ENCODE measurements at regions of chr5 and their contacts with region 1.

Region 1: DNA sequence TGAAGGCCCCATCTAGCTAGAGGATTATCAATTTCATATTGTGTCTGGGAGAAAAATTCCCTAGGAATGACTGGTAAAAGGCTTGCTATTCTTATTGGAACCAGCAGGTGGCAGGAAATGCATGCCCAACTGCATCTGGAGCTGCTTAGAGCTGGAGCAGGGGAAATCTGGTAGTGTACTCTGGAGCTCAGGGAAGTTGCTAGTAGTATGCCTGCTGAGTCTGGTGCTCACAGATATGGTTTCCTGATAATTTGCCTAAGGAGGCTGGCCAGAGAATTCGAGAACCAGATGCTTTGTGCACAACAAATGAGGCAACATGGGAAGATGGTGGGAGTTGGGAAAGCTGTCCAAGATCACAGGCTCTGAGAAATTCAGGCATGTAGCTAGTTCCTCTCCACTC is 53.7 kb downstream of the G3BP1 start:
- DNase-seq: peak; percentile 17
- ATAC-seq: peak; percentile 91
- H3K4me3 ChIP-seq: no peak overlapping the region
- H3K27ac ChIP-seq: no peak overlapping the region
- H3K4me1 ChIP-seq: no peaks in the 10 kb centered on the region
- H3K27me3 ChIP-seq: no peaks in the 10 kb centered on the region
- CTCF ChIP-seq: peak; percentile 76 to 95 (median 84)
- EP300 ChIP-seq: no peak
- POLR2A ChIP-seq: no peak
- RAD21 ChIP-seq: peak; percentile 98

Region 2: GRCh38 chr5:151740336-151740942 is 85.0 kb before region 1 on chr5:
- CTCF ChIA-PET with region 1: no interaction called
- POLR2A ChIA-PET with region 1: no interaction called
- RAD21 ChIA-PET with region 1: no interaction called
- SMC1A ChIA-PET with region 1: no interaction called
- in situ Hi-C with region 1: no loop called
- intact Hi-C with region 1: no loop called
- DNase-seq: no peak
- ATAC-seq: peak; percentile 70
- H3K4me3 ChIP-seq: no peak overlapping the region
- H3K27ac ChIP-seq: peak overlapping the region; percentile 54
- H3K4me1 ChIP-seq: peaks cover 39% of the 10 kb centered on the region
- H3K27me3 ChIP-seq: no peaks in the 10 kb centered on the region
- CTCF ChIP-seq: peak; percentile 76 to 88 (median 81)
- EP300 ChIP-seq: no peak
- POLR2A ChIP-seq: no peak
- RAD21 ChIP-seq: peak; percentile 90

Region 3: DNA sequence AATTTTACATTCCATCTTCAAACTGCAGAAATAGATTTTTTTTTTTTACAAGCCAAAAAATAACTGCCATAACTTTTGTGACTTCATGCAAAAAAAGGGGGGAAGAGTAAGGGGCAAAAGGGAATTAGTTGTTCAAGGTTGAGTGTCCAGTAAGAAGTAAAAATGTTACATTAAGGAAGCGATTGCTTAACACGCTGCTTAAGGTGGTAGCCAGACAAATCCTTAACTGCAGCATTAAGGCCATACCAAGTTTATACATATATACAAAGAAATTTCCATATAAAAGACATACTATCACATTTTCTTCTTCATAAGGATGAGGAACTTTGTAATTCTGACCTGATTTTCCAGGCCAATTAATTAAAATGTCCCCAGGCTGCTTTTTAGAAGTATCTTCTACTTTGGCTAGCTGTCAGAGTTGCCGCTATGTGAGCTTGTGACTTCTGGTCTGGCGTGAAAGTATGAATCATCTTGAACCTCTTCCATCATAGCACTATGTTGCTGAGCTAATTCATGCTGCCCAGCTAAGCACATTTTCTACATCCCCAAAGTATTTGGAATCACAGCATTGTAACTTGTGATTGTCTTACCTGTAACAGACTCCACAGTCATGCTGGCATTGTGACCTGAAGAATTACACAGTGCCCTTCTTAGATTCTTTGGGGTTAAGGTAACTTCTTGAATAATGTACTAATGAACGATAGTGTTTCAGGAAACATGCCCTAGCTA is 13.7 kb before region 1 on chr5:
- CTCF ChIA-PET with region 1: interaction called, 19 read pairs
- POLR2A ChIA-PET with region 1: no interaction called
- RAD21 ChIA-PET with region 1: interaction called, 6 read pairs
- SMC1A ChIA-PET with region 1: interaction called, 19 read pairs
- in situ Hi-C with region 1: no loop called
- intact Hi-C with region 1: no loop called
- DNase-seq: no peak
- ATAC-seq: no peak
- H3K4me3 ChIP-seq: no peak overlapping the region
- H3K27ac ChIP-seq: no peak overlapping the region
- H3K4me1 ChIP-seq: no peaks in the 10 kb centered on the region
- H3K27me3 ChIP-seq: no peaks in the 10 kb centered on the region
- CTCF ChIP-seq: no peak
- EP300 ChIP-seq: no peak
- POLR2A ChIP-seq: no peak
- RAD21 ChIP-seq: no peak

Region 4: GRCh38 chr5:151903243-151903653 is 77.8 kb after region 1 on chr5:
- CTCF ChIA-PET with region 1: interaction called, 15 read pairs
- POLR2A ChIA-PET with region 1: interaction called, 3 read pairs
- RAD21 ChIA-PET with region 1: interaction called, 7 read pairs
- SMC1A ChIA-PET with region 1: interaction called, 15 read pairs
- in situ Hi-C with region 1: no loop called
- intact Hi-C with region 1: no loop called
- DNase-seq: peak; percentile 80
- ATAC-seq: peak; percentile 93
- H3K4me3 ChIP-seq: 0 out of 2 replicates have a peak overlapping the region, but pooled peaks have one; percentile 31
- H3K27ac ChIP-seq: peak overlapping the region; percentile 72
- H3K4me1 ChIP-seq: peaks cover 25% of the 10 kb centered on the region
- H3K27me3 ChIP-seq: no peaks in the 10 kb centered on the region
- CTCF ChIP-seq: no peak
- EP300 ChIP-seq: peak; percentile 58; a peak in 2 of 4 replicates
- POLR2A ChIP-seq: no peak
- RAD21 ChIP-seq: no peak

Region 5: DNA sequence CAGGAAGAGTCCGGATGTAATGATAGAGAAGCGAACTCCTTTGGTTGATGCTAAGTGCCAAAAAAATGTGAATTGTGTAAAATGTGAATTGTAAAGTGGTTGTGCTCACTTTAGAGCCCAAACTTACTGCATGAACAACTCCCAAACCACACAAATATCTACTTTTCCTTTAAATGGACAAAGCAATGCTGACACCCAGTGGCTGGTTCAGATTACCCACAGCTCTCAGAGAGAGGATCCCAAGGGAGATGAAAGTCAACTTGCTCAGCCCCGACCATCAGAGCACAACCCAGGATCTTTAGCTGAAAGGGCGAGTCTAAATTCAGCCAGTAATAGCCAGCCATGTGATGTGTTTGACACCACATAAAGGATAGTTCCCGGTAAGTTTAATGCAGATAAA is 446.0 kb after region 1 on chr5:
- CTCF ChIA-PET with region 1: interaction called, 4 read pairs
- POLR2A ChIA-PET with region 1: no interaction called
- RAD21 ChIA-PET with region 1: interaction called, 4 read pairs
- SMC1A ChIA-PET with region 1: interaction called, 9 read pairs
- in situ Hi-C with region 1: no loop called
- intact Hi-C with region 1: loop called (anchors 1 kb)
- DNase-seq: peak; percentile 8
- ATAC-seq: peak; percentile 68
- H3K4me3 ChIP-seq: no peak overlapping the region
- H3K27ac ChIP-seq: no peak overlapping the region
- H3K4me1 ChIP-seq: no peaks in the 10 kb centered on the region
- H3K27me3 ChIP-seq: no peaks in the 10 kb centered on the region
- CTCF ChIP-seq: peak in 1 of 3 experiments; percentile 35; a peak in 2 of 6 replicates
- EP300 ChIP-seq: no peak
- POLR2A ChIP-seq: no peak
- RAD21 ChIP-seq: 0 out of 2 replicates have a peak, but pooled peaks have one; percentile 31

Region 6: DNA sequence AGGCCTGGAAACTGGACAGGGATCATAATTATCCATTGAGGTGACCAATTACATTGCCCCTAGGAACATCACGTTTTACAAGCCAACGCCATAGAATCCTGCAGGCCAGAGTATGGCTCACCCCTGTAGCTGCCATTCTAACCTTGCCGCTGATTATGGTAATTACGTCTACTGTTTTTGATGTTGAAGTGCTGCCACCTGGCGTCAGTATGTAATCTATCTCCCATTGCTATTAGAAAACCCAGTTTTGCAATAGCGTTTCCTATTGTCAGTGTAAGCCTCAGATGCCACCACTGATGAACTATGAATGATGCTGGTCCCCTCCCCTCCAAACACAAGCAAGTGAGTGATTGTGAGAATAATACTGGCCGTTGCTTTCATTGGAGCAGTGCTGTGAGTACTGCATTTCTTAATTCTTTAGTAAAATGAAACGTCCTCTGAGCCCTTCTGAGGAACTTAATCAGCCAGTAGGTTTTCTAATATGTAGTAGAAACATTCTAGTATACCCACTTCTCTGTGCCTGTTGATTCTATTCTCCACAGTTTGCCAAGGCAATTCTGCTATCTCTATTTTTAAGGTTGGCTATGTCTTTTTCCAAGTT is 680.1 kb after region 1 on chr5:
- CTCF ChIA-PET with region 1: interaction called, 26 read pairs
- POLR2A ChIA-PET with region 1: no interaction called
- RAD21 ChIA-PET with region 1: no interaction called
- SMC1A ChIA-PET with region 1: interaction called, 13 read pairs
- in situ Hi-C with region 1: loop called (anchors 5 kb)
- intact Hi-C with region 1: loop called (anchors 1 kb)
- DNase-seq: no peak
- ATAC-seq: peak; percentile 94
- H3K4me3 ChIP-seq: no peak overlapping the region
- H3K27ac ChIP-seq: no peak overlapping the region
- H3K4me1 ChIP-seq: no peaks in the 10 kb centered on the region
- H3K27me3 ChIP-seq: no peaks in the 10 kb centered on the region
- CTCF ChIP-seq: peak; percentile 61 to 69 (median 67)
- EP300 ChIP-seq: no peak
- POLR2A ChIP-seq: no peak
- RAD21 ChIP-seq: peak; percentile 77

Measured in GM12878 (cell line).